ENCODE measurements at regions of chr2 and their contacts with region 1.

Region 1: DNA sequence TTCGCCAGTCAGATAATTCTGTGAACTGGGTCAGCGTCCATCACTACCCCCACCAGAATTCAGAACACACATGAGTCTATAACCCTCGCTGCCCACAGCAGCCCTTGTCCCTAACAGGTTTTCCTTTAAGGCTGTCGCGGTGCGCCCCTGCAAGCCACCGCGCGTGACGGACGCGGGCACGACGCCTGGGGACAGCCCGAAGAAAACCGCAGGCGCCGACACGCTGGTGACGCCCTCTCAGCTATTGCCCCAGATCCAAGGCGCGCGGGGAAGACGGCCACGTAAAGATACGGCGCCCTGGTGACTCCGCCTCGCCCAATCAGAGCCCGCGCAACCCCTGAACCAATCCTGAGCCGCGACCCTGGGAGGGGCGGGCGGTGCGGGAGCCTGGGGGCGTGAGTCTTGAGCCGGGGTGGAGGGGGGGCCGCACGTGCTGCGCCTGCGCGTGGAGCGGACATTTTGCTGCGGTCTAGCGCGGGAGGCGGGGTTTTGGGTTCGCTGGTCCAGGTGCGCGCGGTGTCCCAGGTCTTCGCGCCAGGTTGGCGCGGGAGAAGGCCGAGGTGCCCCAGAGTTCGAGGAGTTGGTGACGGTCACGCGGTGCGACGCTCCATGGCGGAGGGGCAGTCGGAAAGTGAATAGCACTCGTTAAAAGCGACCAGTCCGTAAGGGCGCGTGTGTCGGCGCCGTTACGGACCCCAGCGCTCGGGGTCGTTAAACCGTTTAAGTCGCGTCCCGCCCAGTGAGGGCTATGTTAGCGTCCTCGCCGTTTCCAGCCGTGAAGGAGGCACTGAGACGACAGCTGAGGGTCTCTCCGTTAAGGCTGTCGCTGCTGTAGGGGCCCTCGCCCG is 15.9 kb downstream of the NMUR1 start:
- DNase-seq: peak; percentile 98
- H3K4me3 Mint-ChIP-seq: peak overlapping the region; percentile 83
- H3K27ac Mint-ChIP-seq: peak overlapping the region; percentile 95
- H3K4me1 Mint-ChIP-seq: peaks cover 7% of the 10 kb centered on the region
- H3K27me3 Mint-ChIP-seq: no peaks in the 10 kb centered on the region
- CTCF ChIP-seq: no peak

Region 2: DNA sequence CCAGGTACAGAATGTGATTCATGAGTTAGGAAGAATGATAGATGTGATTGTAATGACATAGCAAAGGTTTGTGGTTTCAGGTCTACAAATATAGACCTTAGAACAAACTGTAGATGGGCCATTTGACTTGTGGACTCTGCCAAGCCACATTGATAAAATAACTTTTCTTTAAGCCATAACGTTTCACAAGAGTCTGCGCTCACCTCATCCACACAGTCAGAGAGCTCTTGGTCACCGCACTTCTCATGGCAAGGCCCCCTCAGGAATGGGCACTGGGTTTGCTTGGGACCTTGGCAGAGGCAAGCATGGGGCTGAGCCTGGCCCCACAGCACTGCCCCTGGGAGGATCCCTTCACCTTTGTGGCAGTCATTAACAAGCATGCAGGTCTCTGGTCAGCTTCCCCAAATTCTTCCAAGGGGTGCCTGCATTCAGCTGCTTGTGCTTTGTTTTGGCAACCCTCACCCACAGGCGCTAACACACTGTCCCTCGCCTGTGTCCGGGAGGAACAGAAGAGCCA is 301.9 kb before region 1 on chr2:
- CTCF ChIA-PET with region 1: no interaction called
- POLR2A ChIA-PET with region 1: no interaction called
- intact Hi-C with region 1: no loop called
- DNase-seq: no peak
- H3K4me3 Mint-ChIP-seq: no peak overlapping the region
- H3K27ac Mint-ChIP-seq: no peak overlapping the region
- H3K4me1 Mint-ChIP-seq: no peaks in the 10 kb centered on the region
- H3K27me3 Mint-ChIP-seq: no peaks in the 10 kb centered on the region
- CTCF ChIP-seq: no peak

Region 3: GRCh38 chr2:231482806-231483391 is 31.4 kb before region 1 on chr2:
- CTCF ChIA-PET with region 1: interaction called, 12 read pairs
- POLR2A ChIA-PET with region 1: no interaction called
- intact Hi-C with region 1: no loop called
- DNase-seq: peak; percentile 70
- H3K4me3 Mint-ChIP-seq: peak overlapping the region; percentile 38
- H3K27ac Mint-ChIP-seq: peak overlapping the region; percentile 75
- H3K4me1 Mint-ChIP-seq: peaks cover 9% of the 10 kb centered on the region
- H3K27me3 Mint-ChIP-seq: no peaks in the 10 kb centered on the region
- CTCF ChIP-seq: peak; percentile 86

Region 4: GRCh38 chr2:231557571-231558237 is 43.4 kb after region 1 on chr2:
- CTCF ChIA-PET with region 1: interaction called, 12 read pairs
- POLR2A ChIA-PET with region 1: no interaction called
- intact Hi-C with region 1: loop called (anchors 1 kb)
- DNase-seq: peak; percentile 66
- H3K4me3 Mint-ChIP-seq: no peak overlapping the region
- H3K27ac Mint-ChIP-seq: no peak overlapping the region
- H3K4me1 Mint-ChIP-seq: no peaks in the 10 kb centered on the region
- H3K27me3 Mint-ChIP-seq: no peaks in the 10 kb centered on the region
- CTCF ChIP-seq: peak; percentile 57

Region 5: GRCh38 chr2:231655897-231656296 is 141.6 kb after region 1 on chr2:
- CTCF ChIA-PET with region 1: no interaction called
- POLR2A ChIA-PET with region 1: no interaction called
- intact Hi-C with region 1: no loop called
- DNase-seq: no peak
- H3K4me3 Mint-ChIP-seq: no peak overlapping the region
- H3K27ac Mint-ChIP-seq: no peak overlapping the region
- H3K4me1 Mint-ChIP-seq: no peaks in the 10 kb centered on the region
- H3K27me3 Mint-ChIP-seq: no peaks in the 10 kb centered on the region
- CTCF ChIP-seq: no peak

Measured in MCF 10A (cell line).